ENCODE measurements at regions of chr10 and their contacts with region 1.

Region 1: GRCh38 chr10:73495884-73496674 is at the start of gene PPP3CB:
- DNase-seq: peak; percentile 92
- ATAC-seq: peak; percentile 91
- H3K4me3 ChIP-seq: peak within 1 kb of the TSS; percentile 77 to 99 (median 94)
- H3K27ac ChIP-seq: peak within 1 kb of the TSS; percentile 97
- H3K4me1 ChIP-seq: peaks cover 37% of the 10 kb centered on the region
- H3K27me3 ChIP-seq: no peaks in the 10 kb centered on the region; a peak in 1 of 5 replicates
- CTCF ChIP-seq: no peak
- EP300 ChIP-seq: peak in 1 of 2 experiments; percentile 16; a peak in 1 of 4 replicates
- POLR2A ChIP-seq: no peak
- RAD21 ChIP-seq: no peak
- total RNA-seq, gene PPP3CB: 8.7 and 18.5 TPM in 2 replicates

Region 2: GRCh38 chr10:73252445-73253224 is 243.4 kb before region 1 on chr10 and contains the start of gene MRPS16:
- CTCF ChIA-PET with region 1: no interaction called
- POLR2A ChIA-PET with region 1: interaction called, 5 read pairs
- in situ Hi-C with region 1: loop called (anchors 10 kb)
- intact Hi-C with region 1: no loop called
- DNase-seq: peak; percentile 95
- ATAC-seq: peak; percentile 87
- H3K4me3 ChIP-seq: peak within 1 kb of the TSS; percentile 78 to 92 (median 84)
- H3K27ac ChIP-seq: peak within 1 kb of the TSS; percentile 88
- H3K4me1 ChIP-seq: peaks cover 33% of the 10 kb centered on the region
- H3K27me3 ChIP-seq: no peaks in the 10 kb centered on the region; a peak in 1 of 5 replicates
- CTCF ChIP-seq: no peak
- EP300 ChIP-seq: peak in 1 of 2 experiments; percentile 46; a peak in 2 of 4 replicates
- POLR2A ChIP-seq: peak; percentile 74 to 90
- RAD21 ChIP-seq: peak; percentile 40; the same call in 1 of the 2 replicates
- total RNA-seq, gene MRPS16: 135 and 189 TPM in 2 replicates

Region 3: DNA sequence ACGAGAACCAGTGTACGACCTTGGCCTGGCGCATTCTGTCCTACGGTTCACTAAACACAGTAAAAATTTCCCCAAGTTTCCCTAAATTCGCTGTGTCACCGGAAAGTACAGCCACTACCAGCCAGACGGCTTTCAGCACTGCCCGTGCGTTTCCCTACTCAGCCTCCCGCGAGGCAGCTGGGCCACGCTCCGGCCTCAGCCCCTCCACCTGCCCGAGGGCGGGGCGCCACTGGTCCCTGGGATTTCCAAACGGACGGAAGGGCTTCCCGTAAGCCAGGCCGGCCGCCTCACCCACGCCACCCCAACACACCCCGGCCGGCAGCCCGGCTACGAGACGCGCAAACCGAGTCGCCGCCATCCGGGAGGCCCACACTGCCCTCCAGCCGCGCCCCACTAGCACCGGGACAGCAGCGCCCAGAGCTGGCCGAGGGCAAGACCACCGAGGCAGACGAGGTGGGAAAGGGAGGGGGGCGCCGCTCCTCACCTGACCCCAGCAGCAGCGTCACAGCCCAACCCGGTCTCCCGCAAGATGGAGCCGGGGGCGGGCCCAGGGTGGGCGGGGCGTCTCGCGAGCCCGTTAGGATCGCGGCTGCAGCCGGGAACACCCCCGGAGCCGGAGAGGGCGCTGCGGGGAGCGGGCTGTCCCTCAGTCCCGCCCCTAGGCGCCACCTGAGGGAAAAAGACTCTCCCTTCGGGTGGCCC is 82.4 kb before region 1 on chr10 and contains the start of gene ANXA7:
- CTCF ChIA-PET with region 1: no interaction called
- POLR2A ChIA-PET with region 1: interaction called, 13 read pairs
- in situ Hi-C with region 1: no loop called
- intact Hi-C with region 1: loop called (anchors 2 kb)
- DNase-seq: peak; percentile 81
- ATAC-seq: peak; percentile 95
- H3K4me3 ChIP-seq: peak within 1 kb of the TSS; percentile 64 to 100 (median 89)
- H3K27ac ChIP-seq: peak within 1 kb of the TSS; percentile 99
- H3K4me1 ChIP-seq: peaks cover 65% of the 10 kb centered on the region
- H3K27me3 ChIP-seq: no peaks in the 10 kb centered on the region; a peak in 1 of 5 replicates
- CTCF ChIP-seq: peak; percentile 51
- EP300 ChIP-seq: no peak
- POLR2A ChIP-seq: peak; percentile 61 to 83
- RAD21 ChIP-seq: no peak
- total RNA-seq, gene ANXA7: 89.0 and 139 TPM in 2 replicates

Region 4: DNA sequence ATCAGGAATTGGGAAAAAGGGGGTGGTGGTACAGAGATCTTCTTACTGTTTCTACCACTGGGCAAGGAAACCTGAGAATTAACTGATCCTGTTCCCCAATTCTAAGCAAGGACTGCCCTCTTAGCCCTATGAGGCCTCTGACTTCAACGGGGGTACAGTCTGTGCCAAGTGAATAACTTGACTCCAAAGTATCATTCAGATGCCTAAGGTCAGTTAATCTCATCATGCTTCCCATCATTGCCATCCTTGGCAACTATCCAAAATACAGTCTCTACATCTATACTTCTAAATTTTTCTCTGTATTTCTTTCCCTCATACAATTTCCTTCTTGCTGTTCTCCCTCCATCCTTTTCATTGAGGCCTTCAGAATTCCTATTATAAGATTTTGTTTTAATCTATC is 10.8 kb before region 1 on chr10:
- CTCF ChIA-PET with region 1: no interaction called
- POLR2A ChIA-PET with region 1: interaction called, 10 read pairs
- in situ Hi-C with region 1: no loop called
- intact Hi-C with region 1: no loop called
- DNase-seq: no peak
- ATAC-seq: no peak
- H3K4me3 ChIP-seq: no peak overlapping the region
- H3K27ac ChIP-seq: no peak overlapping the region
- H3K4me1 ChIP-seq: no peaks in the 10 kb centered on the region
- H3K27me3 ChIP-seq: no peaks in the 10 kb centered on the region
- CTCF ChIP-seq: no peak
- EP300 ChIP-seq: no peak
- POLR2A ChIP-seq: no peak
- RAD21 ChIP-seq: no peak

Measured in HepG2 (cell line).